KBM-7 (cell line): ENCODE measurements at regions of chr20 and their contacts with region 1.

Region 1: GRCh38 chr20:6075428-6076219 is 21.8 kb upstream of the LRRN4 start:
- DNase-seq: no peak

Region 2: GRCh38 chr20:5806457-5807263 is 269.0 kb before region 1 on chr20:
- in situ Hi-C with region 1: loop called (anchors 25 kb)
- DNase-seq: no peak